PC-9 (cell line): ENCODE measurements at regions of chr9 and their contacts with region 1.

Region 1: DNA sequence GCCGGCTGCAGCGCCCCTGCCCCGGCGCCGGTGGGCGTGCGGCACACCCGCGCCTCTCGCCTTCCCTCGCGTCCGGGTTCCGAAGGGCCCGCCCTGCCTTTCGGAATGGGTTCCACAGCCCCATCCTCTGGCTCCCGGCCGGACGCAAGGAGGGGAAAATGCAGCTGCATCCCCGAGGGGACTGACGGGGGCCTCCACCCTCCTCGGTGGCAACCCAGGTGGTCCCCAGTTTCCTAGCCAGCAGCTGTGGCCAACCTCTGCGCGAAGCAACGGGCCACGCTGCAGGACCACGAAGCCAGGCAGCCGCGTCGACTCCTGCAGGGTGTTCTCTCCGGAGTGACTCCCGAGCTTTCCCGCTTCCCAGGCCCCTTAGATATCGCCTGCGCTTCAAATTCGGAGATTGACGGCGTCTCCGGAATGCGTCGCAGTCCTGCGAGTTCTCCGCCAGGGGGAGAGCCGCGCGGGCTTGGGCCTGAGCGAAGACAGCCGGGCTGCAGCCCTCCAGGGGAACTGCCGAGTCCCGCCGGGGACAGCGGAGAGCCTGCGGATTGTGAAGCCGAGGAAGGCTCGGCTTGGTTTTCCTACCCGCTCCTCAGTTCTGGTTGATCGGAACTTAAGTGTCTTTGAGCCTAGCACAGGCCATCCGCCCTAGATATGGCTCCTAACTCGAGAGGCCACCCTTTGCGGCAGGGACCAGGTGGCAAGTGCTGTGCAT is 582 bp upstream of the APBA1 start:
- DNase-seq: peak; percentile 73 to 80
- H3K4me3 ChIP-seq: peak overlapping the region; percentile 76
- H3K27ac ChIP-seq: no peak overlapping the region
- H3K4me1 ChIP-seq: peaks cover 32% of the 10 kb centered on the region
- H3K27me3 ChIP-seq: no peaks in the 10 kb centered on the region
- CTCF ChIP-seq: peak; percentile 84

Region 2: DNA sequence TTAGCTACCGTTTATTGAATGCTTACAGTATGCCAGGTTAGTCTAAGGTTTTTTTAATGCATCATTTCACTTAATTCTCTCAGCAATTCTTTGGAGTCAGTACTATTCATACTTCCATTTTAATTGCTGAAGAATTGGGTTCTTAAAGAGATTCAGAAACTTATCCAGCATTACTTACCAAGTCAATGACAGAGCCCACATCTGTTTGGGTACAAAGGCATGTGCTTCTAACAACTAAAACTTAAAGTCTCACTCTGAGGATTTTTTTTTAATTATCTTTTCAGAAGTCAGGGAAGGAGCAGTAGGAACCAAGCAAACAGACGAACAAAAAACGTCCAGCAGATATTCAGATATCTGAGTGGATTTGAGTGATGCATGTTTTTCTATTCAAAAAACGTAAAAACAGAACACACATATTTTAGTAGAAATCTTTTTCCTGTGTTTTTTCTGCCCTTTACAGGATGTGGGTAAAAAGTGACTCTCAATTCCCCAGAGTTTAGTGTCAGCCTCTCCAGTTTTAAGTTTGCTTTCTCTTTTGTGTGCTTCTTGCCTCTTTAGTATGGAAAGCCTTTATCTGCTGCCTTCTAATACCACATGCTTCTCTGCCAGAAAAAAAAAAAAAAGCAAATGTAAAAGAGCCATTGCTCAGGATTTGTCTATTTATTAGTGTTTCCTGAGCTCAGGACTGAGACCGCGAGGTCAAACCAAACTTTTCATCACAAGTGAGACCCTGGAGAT is 776.8 kb before region 1 on chr9:
- CTCF ChIA-PET with region 1: no interaction called
- POLR2A ChIA-PET with region 1: no interaction called
- intact Hi-C with region 1: no loop called
- DNase-seq: no peak
- H3K4me3 ChIP-seq: no peak overlapping the region
- H3K27ac ChIP-seq: no peak overlapping the region
- H3K4me1 ChIP-seq: no peaks in the 10 kb centered on the region
- H3K27me3 ChIP-seq: peaks cover 22% of the 10 kb centered on the region
- CTCF ChIP-seq: no peak

Region 3: GRCh38 chr9:69421908-69422801 is 250.6 kb before region 1 on chr9:
- CTCF ChIA-PET with region 1: no interaction called
- POLR2A ChIA-PET with region 1: no interaction called
- intact Hi-C with region 1: loop called (anchors 5 kb)
- DNase-seq: peak in 1 of 2 experiments; percentile 49
- H3K4me3 ChIP-seq: no peak overlapping the region
- H3K27ac ChIP-seq: no peak overlapping the region
- H3K4me1 ChIP-seq: no peaks in the 10 kb centered on the region
- H3K27me3 ChIP-seq: no peaks in the 10 kb centered on the region
- CTCF ChIP-seq: peak; percentile 93

Region 4: DNA sequence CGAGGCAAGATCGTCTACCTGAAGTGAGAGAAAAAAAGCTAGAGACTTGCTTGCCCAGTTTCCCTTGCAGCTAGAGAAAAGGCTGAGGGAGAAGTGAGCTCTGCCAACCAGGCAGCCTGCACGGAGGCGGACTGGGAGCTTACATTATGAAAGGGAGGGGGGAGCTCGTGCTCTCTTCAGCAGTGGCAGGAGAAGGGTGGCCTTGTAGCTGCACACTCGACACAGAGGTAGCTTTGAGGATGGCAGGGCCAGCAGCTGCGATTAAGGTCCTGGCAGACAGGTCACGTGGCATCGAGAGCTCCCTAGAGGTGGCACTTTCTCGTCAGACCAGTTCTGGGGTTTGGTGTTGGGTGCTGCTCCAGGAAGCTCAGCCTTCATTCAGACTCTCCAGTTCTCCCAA is 27.3 kb before region 1 on chr9:
- CTCF ChIA-PET with region 1: interaction called, 10 read pairs
- POLR2A ChIA-PET with region 1: no interaction called
- intact Hi-C with region 1: no loop called
- DNase-seq: peak; percentile 61 to 73
- H3K4me3 ChIP-seq: no peak overlapping the region
- H3K27ac ChIP-seq: no peak overlapping the region
- H3K4me1 ChIP-seq: no peaks in the 10 kb centered on the region
- H3K27me3 ChIP-seq: no peaks in the 10 kb centered on the region
- CTCF ChIP-seq: no peak

Region 5: DNA sequence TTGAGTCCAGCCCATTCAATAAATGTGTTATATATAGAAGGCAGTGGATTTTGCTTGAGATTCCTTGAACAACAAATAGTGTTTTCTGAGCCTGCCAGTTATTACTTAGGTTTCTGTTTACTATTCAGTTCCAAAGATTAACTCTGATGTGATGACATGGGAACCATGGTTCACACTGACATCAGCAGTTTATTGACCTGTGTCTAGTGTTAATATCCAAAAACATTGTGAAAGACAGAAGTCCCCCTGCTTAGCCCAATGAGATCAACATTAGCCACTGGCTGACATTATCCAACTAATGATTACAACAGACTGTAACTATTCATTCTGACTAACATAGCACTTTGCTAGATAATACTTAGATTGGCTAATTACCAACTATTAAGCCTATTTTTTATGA is 15.5 kb before region 1 on chr9:
- CTCF ChIA-PET with region 1: no interaction called
- POLR2A ChIA-PET with region 1: no interaction called
- intact Hi-C with region 1: no loop called
- DNase-seq: no peak
- H3K4me3 ChIP-seq: no peak overlapping the region
- H3K27ac ChIP-seq: no peak overlapping the region
- H3K4me1 ChIP-seq: no peaks in the 10 kb centered on the region
- H3K27me3 ChIP-seq: no peaks in the 10 kb centered on the region
- CTCF ChIP-seq: no peak

Region 6: DNA sequence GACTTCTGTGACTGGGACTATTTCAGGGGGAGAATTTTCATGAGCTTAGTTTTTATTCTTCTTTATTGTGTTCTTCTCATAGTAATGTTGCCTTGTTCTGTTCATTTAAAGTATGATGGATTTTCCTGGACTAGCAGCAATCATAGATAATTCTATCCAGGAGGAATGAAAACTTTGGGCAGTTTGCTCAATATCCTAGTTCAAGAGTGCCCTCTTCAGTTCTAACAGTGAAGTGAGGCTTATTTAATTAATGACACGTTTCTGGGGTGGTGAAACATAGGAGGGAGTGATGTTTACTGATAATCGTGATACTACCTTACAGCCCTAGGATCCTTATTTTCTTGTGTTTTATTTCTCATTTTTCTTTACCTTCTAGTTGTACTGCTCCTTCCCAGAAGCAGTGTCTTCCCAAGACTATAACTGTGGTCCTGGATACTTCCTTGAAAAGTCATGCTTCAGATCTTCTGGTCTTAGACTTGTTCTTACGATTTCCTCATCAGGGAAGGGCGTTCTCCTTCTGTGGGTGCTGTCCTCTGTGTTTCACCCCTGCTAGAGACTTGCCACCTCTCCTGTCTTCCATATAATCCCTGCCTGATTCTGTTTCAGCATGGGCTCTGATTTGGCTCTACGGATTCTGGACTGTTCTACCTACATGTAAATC is 205.2 kb after region 1 on chr9:
- CTCF ChIA-PET with region 1: no interaction called
- POLR2A ChIA-PET with region 1: no interaction called
- intact Hi-C with region 1: loop called (anchors 2 kb)
- DNase-seq: peak in 1 of 2 experiments; percentile 37
- H3K4me3 ChIP-seq: no peak overlapping the region
- H3K27ac ChIP-seq: no peak overlapping the region
- H3K4me1 ChIP-seq: 0 out of 2 replicates have a peak, but pooled peaks cover 5% of the 10 kb centered on the region
- H3K27me3 ChIP-seq: no peaks in the 10 kb centered on the region
- CTCF ChIP-seq: peak; percentile 73

Region 7: GRCh38 chr9:70111042-70111602 is 438.4 kb after region 1 on chr9:
- CTCF ChIA-PET with region 1: no interaction called
- POLR2A ChIA-PET with region 1: no interaction called
- intact Hi-C with region 1: loop called (anchors 10 kb)
- DNase-seq: peak; percentile 48 to 58
- H3K4me3 ChIP-seq: no peak overlapping the region
- H3K27ac ChIP-seq: peak overlapping the region; percentile 46
- H3K4me1 ChIP-seq: peaks cover 28% of the 10 kb centered on the region
- H3K27me3 ChIP-seq: no peaks in the 10 kb centered on the region
- CTCF ChIP-seq: peak; percentile 91

Region 8: GRCh38 chr9:70602321-70603019 is 929.7 kb after region 1 on chr9:
- CTCF ChIA-PET with region 1: no interaction called
- POLR2A ChIA-PET with region 1: no interaction called
- intact Hi-C with region 1: loop called (anchors 10 kb)
- DNase-seq: peak; percentile 56 to 57
- H3K4me3 ChIP-seq: no peak overlapping the region
- H3K27ac ChIP-seq: no peak overlapping the region
- H3K4me1 ChIP-seq: no peaks in the 10 kb centered on the region
- H3K27me3 ChIP-seq: no peaks in the 10 kb centered on the region
- CTCF ChIP-seq: peak; percentile 87